Activated CD4-positive, alpha-beta T cell treated with anti-CD3 and anti-CD28 coated beads, Interleukin-2, amount 10 ng/mL, durations not matched to agents 24 days and 14 days (primary cell): ENCODE measurements at regions of chr1 and their contacts with region 1.

Region 1: GRCh38 chr1:6235296-6235677 is 477 bp downstream of the ICMT start:
- DNase-seq: peak; percentile 76
- H3K4me3 Mint-ChIP-seq: peak overlapping the region; percentile 90
- H3K27ac Mint-ChIP-seq: peak overlapping the region; percentile 86
- H3K4me1 Mint-ChIP-seq: peaks cover 15% of the 10 kb centered on the region
- H3K27me3 Mint-ChIP-seq: peaks cover 15% of the 10 kb centered on the region

Region 2: GRCh38 chr1:6026095-6026809 is 209.0 kb before region 1 on chr1:
- intact Hi-C with region 1: loop called (anchors 10 kb)
- DNase-seq: peak; percentile 98
- H3K4me3 Mint-ChIP-seq: peak overlapping the region; percentile 94
- H3K27ac Mint-ChIP-seq: peak overlapping the region; percentile 95
- H3K4me1 Mint-ChIP-seq: peaks cover 43% of the 10 kb centered on the region
- H3K27me3 Mint-ChIP-seq: no peaks in the 10 kb centered on the region

Region 3: GRCh38 chr1:6199298-6200187 is 35.7 kb before region 1 on chr1 and contains the start of gene RPL22:
- intact Hi-C with region 1: loop called (anchors 5 kb)
- DNase-seq: peak; percentile 99
- H3K4me3 Mint-ChIP-seq: peak within 1 kb of the TSS; percentile 88
- H3K27ac Mint-ChIP-seq: peak within 1 kb of the TSS; percentile 85
- H3K4me1 Mint-ChIP-seq: peaks cover 37% of the 10 kb centered on the region
- H3K27me3 Mint-ChIP-seq: no peaks in the 10 kb centered on the region
- total RNA-seq, gene RPL22: 437 and 463 TPM in 2 replicates

Region 4: GRCh38 chr1:6205849-6206519 is 29.3 kb before region 1 on chr1 and contains the start of gene RNF207:
- intact Hi-C with region 1: loop called (anchors 1 kb)
- DNase-seq: peak; percentile 94
- H3K4me3 Mint-ChIP-seq: peak within 1 kb of the TSS; percentile 85
- H3K27ac Mint-ChIP-seq: peak within 1 kb of the TSS; percentile 82
- H3K4me1 Mint-ChIP-seq: peaks cover 17% of the 10 kb centered on the region
- H3K27me3 Mint-ChIP-seq: no peaks in the 10 kb centered on the region
- total RNA-seq, gene RNF207: 53.2 and 54.7 TPM in 2 replicates